Caco-2 (cell line): ENCODE measurements at regions of chr2 and their contacts with region 1.

Region 1: DNA sequence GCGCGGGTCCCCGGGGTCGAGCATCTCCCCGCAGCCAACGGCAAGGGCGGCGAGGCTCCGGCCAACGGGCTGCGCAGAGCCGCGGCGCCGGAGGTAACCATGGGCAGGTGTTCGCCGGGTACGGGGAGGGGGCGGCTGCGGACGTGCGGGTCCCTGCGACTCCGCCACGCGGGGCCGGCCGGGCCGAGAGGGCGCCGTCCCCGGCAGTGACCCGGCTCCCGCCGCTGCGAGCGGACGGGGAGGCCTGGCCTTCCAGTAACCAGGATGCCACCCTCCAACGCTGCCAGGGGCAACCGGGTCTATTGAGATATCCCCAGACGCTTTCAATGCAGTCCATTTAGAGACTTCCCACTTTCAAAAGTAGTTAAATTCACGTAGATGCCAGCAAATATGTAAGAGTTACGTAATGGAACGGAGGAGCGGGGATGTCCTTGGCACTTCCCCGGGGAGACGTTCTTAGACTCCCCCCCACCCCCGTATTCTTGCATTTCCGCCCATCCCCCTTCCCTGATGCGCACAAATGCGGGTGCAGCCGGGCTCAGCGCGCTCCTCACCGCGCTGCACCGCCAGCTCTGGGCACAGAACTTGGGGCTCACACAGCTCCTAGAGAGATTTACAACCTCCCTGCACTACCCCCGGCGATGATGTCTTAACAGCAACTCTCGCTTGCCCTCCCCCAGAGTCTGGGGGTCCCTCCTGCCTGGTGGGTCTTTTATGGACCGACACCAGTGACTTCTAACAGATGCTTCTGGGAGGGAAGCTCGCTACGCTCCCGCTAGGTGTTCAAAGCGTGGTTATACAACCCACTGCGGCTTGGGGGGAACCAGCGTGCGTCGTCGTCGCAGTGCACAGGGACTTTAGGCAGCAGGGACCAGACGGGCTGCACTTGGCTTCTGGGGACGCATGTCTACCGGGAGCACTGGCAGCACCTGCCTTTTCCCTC is 657 bp downstream of the SGPP2 start:
- DNase-seq: peak in 1 of 2 experiments; percentile 15
- H3K4me3 ChIP-seq: peak overlapping the region; percentile 41
- H3K4me3 Mint-ChIP-seq: peak overlapping the region; percentile 84
- H3K27ac Mint-ChIP-seq: no peak overlapping the region
- H3K4me1 ChIP-seq: peaks cover 3% of the 10 kb centered on the region; the same call in 1 of the 2 replicates
- H3K4me1 Mint-ChIP-seq: peaks cover 12% of the 10 kb centered on the region
- H3K27me3 ChIP-seq: peaks cover 5% of the 10 kb centered on the region; the same call in 1 of the 2 replicates
- H3K27me3 Mint-ChIP-seq: peaks cover 29% of the 10 kb centered on the region
- CTCF ChIP-seq: no peak

Region 2: GRCh38 chr2:221948076-221948475 is 476.9 kb before region 1 on chr2:
- CTCF ChIA-PET with region 1: no interaction called
- POLR2A ChIA-PET with region 1: interaction called, 10 read pairs
- intact Hi-C with region 1: no loop called
- DNase-seq: no peak
- H3K4me3 ChIP-seq: no peak overlapping the region
- H3K4me3 Mint-ChIP-seq: no peak overlapping the region
- H3K27ac Mint-ChIP-seq: no peak overlapping the region
- H3K4me1 ChIP-seq: no peaks in the 10 kb centered on the region
- H3K4me1 Mint-ChIP-seq: no peaks in the 10 kb centered on the region
- H3K27me3 ChIP-seq: no peaks in the 10 kb centered on the region
- H3K27me3 Mint-ChIP-seq: no peaks in the 10 kb centered on the region
- CTCF ChIP-seq: no peak

Region 3: GRCh38 chr2:222290736-222291484 is 134.1 kb before region 1 on chr2:
- CTCF ChIA-PET with region 1: no interaction called
- POLR2A ChIA-PET with region 1: no interaction called
- intact Hi-C with region 1: no loop called
- DNase-seq: no peak
- H3K4me3 ChIP-seq: no peak overlapping the region
- H3K4me3 Mint-ChIP-seq: peak overlapping the region; percentile 52
- H3K27ac Mint-ChIP-seq: no peak overlapping the region
- H3K4me1 ChIP-seq: no peaks in the 10 kb centered on the region
- H3K4me1 Mint-ChIP-seq: no peaks in the 10 kb centered on the region
- H3K27me3 ChIP-seq: no peaks in the 10 kb centered on the region
- H3K27me3 Mint-ChIP-seq: peaks cover 46% of the 10 kb centered on the region
- CTCF ChIP-seq: no peak

Region 4: DNA sequence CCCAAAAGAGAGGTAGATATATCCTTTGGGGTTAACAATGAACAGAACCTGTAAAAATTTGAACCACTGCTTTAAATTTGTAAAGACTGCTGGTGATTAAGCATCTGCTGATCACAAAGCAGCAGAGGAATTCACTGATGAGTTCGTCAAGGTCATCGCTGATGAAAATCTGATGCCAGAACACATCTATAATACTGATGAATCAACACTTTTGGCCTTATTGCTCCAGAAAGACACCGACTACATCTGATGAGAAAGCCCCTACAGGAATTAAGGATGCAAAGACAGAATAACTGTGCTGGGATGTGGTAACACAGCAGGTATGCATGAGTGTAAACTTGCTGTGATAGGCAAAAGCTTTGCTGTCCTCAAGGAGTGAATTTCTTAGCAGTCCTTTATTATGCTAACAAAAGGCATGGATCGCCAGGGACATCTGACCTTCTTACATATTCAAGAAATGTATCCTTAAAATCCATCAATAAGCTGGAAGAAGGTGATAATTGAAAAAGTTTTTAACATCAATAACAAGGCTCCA is 31.2 kb before region 1 on chr2:
- CTCF ChIA-PET with region 1: no interaction called
- POLR2A ChIA-PET with region 1: no interaction called
- intact Hi-C with region 1: loop called (anchors 2 kb)
- DNase-seq: no peak
- H3K4me3 ChIP-seq: no peak overlapping the region
- H3K4me3 Mint-ChIP-seq: no peak overlapping the region
- H3K27ac Mint-ChIP-seq: no peak overlapping the region
- H3K4me1 ChIP-seq: no peaks in the 10 kb centered on the region
- H3K4me1 Mint-ChIP-seq: no peaks in the 10 kb centered on the region
- H3K27me3 ChIP-seq: no peaks in the 10 kb centered on the region
- H3K27me3 Mint-ChIP-seq: no peaks in the 10 kb centered on the region
- CTCF ChIP-seq: no peak

Region 5: GRCh38 chr2:222548992-222549391 is 124.0 kb after region 1 on chr2:
- CTCF ChIA-PET with region 1: no interaction called
- POLR2A ChIA-PET with region 1: no interaction called
- intact Hi-C with region 1: no loop called
- DNase-seq: no peak
- H3K4me3 ChIP-seq: no peak overlapping the region
- H3K4me3 Mint-ChIP-seq: no peak overlapping the region
- H3K27ac Mint-ChIP-seq: no peak overlapping the region
- H3K4me1 ChIP-seq: no peaks in the 10 kb centered on the region
- H3K4me1 Mint-ChIP-seq: no peaks in the 10 kb centered on the region
- H3K27me3 ChIP-seq: no peaks in the 10 kb centered on the region; the same call in 1 of the 2 replicates
- H3K27me3 Mint-ChIP-seq: peaks cover 7% of the 10 kb centered on the region
- CTCF ChIP-seq: no peak